Aorta (tissue), 5 donors: ENCODE measurements at regions of chr3 and their contacts with region 1.

Region 1: DNA sequence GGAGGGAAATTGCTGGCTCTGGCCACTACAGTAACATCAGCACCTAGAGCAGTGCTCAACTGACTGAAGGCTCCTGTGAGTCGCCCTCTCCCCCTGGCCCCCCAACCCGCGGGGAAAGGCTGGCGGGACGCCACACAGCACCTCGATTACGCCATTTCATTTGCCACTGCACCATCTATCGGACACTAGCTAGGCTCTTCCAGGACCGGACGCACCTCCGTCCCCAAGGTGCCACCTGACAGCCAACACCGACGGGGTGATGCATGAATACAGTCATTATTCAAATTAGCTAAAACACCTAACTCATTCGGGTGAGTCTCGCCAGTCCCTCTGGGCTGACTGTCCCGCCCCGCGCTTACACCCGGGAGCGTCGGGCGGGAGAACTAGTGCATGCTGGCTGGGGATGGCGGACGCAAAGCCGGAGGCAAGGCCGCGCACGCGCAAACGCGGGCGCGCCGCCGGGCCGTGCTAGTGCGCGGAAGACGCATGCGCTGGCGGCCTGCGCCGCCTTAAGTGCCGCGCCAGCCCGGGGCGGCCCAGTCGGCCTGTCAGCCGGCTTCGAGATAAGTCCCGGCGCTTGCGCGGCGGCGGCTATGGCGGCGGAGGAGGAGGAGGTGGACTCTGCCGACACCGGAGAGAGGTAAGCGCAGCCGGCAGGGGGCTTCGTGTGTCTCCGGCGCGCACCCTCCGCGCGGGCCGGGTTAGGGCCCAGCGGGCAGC is at the start of gene ABHD5:
- DNase-seq: peak; percentile 93 to 96
- ATAC-seq: peak; percentile 97
- H3K4me3 ChIP-seq: peak within 1 kb of the TSS; percentile 84
- H3K27ac ChIP-seq: peak within 1 kb of the TSS in 1 of 2 donors; percentile 48
- H3K4me1 ChIP-seq: no peaks in the 10 kb centered on the region
- H3K27me3 ChIP-seq: no peaks in the 10 kb centered on the region
- total RNA-seq, gene ABHD5: 16.2 to 28.8 TPM

Region 2: GRCh38 chr3:43036621-43037423 is 653.7 kb before region 1 on chr3:
- intact Hi-C with region 1: no loop called
- DNase-seq: no peak
- ATAC-seq: no peak
- H3K4me3 ChIP-seq: no peak overlapping the region
- H3K27ac ChIP-seq: no peak overlapping the region
- H3K4me1 ChIP-seq: no peaks in the 10 kb centered on the region
- H3K27me3 ChIP-seq: no peaks in the 10 kb centered on the region

Region 3: GRCh38 chr3:43584043-43584826 is 106.3 kb before region 1 on chr3:
- intact Hi-C with region 1: loop called in 1 of 2 experiments (anchors 5 kb)
- DNase-seq: no peak
- ATAC-seq: no peak
- H3K4me3 ChIP-seq: no peak overlapping the region
- H3K27ac ChIP-seq: no peak overlapping the region
- H3K4me1 ChIP-seq: peaks cover 0 to 3% of the 10 kb centered on the region in 2 donors
- H3K27me3 ChIP-seq: no peaks in the 10 kb centered on the region

Region 4: DNA sequence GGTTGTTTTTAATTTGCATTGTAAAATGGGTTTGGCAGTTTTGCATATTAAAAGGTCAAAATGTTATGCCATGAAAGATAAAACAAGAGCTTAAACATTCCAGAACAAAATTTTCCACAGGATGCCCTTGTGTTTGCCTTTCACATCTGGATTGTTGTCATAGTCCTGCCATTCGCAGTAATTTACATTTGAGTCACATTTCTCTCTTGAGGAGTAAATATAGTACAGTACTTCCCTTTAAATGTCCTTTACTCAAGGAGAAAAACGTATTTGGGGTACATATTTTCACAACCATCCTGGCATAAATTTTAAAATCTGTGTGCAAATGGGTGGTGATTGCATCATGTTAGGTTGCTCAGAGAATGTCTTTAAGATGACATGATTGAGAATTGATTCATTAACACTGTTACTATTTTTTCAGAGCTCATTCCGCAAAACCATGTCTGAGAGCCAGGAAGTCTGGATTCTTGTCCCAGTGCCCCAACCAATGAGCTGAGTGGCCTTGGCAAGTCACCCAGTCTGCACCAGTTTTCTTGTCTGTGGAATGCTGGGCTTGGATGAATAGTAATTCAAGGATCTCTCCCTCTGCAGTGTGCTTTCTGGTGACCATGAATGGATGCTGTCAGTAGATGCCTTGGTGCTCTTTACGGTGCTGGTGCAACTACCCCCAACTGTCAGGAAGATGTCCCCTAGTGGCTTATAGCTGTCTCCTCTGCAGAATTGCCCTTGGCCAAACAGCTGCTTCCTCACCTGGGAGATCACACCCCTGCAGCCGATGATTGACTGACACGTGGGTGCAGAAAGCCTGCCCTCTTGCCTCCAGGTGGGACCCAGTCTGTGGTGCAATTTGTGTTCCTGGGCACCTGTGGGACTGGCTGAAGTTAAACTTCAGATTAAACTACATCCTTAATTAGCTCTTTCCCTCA is 43.2 kb after region 1 on chr3:
- intact Hi-C with region 1: loop called in 1 of 2 experiments (anchors 5 kb)
- DNase-seq: peak; percentile 88
- ATAC-seq: peak; percentile 84
- H3K4me3 ChIP-seq: no peak overlapping the region
- H3K27ac ChIP-seq: peak overlapping the region; percentile 72 to 91
- H3K4me1 ChIP-seq: peaks cover under 1 to 9% of the 10 kb centered on the region in 2 donors
- H3K27me3 ChIP-seq: no peaks in the 10 kb centered on the region

Region 5: GRCh38 chr3:43855674-43856299 is 165.2 kb after region 1 on chr3:
- intact Hi-C with region 1: loop called in 1 of 2 experiments (anchors 10 kb)
- DNase-seq: peak in 1 of 2 donors; percentile 77
- ATAC-seq: peak; percentile 71
- H3K4me3 ChIP-seq: no peak overlapping the region
- H3K27ac ChIP-seq: no peak overlapping the region
- H3K4me1 ChIP-seq: no peaks in the 10 kb centered on the region
- H3K27me3 ChIP-seq: no peaks in the 10 kb centered on the region

Region 6: DNA sequence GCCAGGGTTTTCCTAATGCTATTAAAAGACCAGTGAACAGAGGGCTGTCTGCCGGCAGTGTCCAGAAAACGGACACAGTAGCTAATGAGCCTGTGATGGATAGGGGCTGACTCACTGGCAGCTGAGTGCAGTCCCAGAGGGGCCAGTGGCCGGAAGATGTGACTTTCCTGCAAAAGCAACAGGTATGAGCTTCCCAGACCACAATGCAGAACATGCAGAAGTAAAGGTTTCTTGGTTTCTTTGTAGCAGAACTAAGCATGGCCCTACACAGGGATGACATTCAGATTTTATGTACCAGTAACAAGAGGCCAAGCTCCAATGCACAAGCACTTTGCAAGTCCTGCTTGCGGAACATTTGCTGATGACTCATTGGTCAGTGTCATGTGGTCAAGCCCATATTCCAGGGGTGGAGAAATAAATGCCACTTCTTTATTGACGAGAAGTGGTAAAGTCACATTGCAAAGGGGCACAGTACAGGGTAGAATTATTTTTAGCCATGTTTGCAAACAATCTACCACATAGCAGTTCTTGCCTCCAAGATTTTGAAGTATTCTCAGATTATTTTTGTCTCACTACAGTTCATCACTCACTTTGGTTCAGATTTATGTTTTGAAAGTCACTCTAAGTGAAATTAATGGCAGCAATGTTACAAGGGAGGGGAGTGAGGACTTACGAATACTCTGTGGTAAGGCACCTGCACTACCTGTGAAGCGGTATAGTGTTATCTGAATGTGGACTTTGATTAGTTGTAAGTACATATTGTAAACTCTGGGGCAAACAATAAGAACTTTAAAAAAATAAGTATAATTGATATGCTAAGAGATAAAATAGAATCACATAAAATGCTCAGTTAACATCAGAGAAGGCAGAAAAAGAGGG is 263.5 kb after region 1 on chr3:
- intact Hi-C with region 1: no loop called
- DNase-seq: no peak
- ATAC-seq: no peak
- H3K4me3 ChIP-seq: no peak overlapping the region
- H3K27ac ChIP-seq: no peak overlapping the region
- H3K4me1 ChIP-seq: no peaks in the 10 kb centered on the region
- H3K27me3 ChIP-seq: no peaks in the 10 kb centered on the region